Activated T-helper 1 cell treated with anti-CD3 and anti-CD28 coated beads, Interleukin-12 subunit alpha, Interleukin-12 subunit beta, Interleukin-2, Interleukin-4 antibody, amounts not matched to agents 30 ng/mL and 10 ng/mL and 1 ng/mL, durations not matched to agents 14 hours and 24 hours and 36 hours (primary cell): ENCODE measurements at regions of chr11 and their contacts with region 1.

Region 1: DNA sequence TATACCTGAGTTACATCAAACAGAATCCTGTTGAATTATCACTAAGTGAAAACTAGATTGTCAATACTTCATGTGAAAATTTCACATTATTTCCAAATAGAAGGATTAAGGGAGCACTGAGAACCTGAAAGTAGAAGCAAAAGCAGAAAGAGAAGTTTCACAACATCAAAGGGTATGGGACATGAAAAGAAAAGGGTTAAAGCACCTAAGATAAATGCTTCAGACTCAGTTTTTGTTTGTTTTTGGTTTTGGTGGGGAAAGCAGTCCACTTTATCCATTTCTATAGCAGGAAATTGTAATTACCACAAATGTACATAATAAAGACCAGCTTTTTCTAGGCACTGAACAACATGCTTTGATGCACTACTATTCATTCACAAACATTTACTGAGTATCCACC is 1069.7 kb upstream of the CCDC90B start:
- DNase-seq: no peak
- H3K4me3 Mint-ChIP-seq: no peak overlapping the region
- H3K27ac Mint-ChIP-seq: no peak overlapping the region
- H3K4me1 Mint-ChIP-seq: no peaks in the 10 kb centered on the region
- H3K27me3 Mint-ChIP-seq: no peaks in the 10 kb centered on the region

Region 2: DNA sequence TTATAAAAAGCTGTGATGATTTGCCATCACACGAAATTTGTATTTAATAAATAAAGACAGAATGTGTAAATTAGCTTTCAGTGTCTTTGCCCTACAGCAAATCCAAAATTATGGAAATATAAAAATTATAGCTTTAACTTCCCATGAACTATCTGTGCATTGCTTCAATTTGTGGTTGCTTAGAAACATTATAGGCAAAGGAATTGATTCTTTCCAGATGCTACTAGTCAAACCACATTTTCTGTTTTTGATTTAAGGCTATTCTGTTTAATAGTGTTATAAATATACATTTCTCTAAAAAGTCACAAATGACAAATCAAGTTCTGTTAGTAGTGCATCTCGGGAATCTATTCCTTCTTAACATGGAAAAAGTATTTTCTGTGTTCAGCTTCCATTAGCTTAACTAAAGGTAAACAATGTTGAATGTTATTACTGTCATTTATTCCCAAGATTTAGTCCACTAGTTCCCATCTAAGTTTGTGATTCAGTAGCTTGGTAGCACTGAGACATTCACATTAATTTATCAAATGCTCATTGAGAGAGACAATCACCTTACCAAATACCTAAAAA is 16.6 kb after region 1 on chr11:
- intact Hi-C with region 1: no loop called
- DNase-seq: no peak
- H3K4me3 Mint-ChIP-seq: no peak overlapping the region
- H3K27ac Mint-ChIP-seq: no peak overlapping the region
- H3K4me1 Mint-ChIP-seq: no peaks in the 10 kb centered on the region
- H3K27me3 Mint-ChIP-seq: no peaks in the 10 kb centered on the region

Region 3: DNA sequence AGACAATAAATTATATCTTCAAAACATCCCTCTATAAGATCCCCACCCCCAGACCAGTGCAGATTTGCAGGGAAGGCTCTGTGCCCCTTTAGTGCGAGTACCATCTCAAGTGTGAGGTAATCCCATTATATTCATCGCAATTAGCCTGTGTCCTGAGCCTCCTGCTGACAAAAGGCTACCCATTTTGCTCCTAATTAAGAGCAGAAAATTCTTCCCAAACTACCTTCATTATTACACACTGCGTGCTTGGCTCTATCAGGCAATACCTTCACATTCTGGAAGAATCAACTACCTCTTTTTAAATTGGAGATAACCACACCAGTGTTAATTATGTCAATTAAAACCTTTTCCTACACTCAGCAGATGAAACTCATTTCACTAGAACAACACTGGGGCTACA is 63.7 kb after region 1 on chr11:
- intact Hi-C with region 1: loop called (anchors 10 kb)
- DNase-seq: no peak
- H3K4me3 Mint-ChIP-seq: no peak overlapping the region
- H3K27ac Mint-ChIP-seq: no peak overlapping the region
- H3K4me1 Mint-ChIP-seq: no peaks in the 10 kb centered on the region
- H3K27me3 Mint-ChIP-seq: no peaks in the 10 kb centered on the region